Esophagus muscularis mucosa (tissue), 4 donors: ENCODE measurements at regions of chr16 and their contacts with region 1.

Region 1: GRCh38 chr16:11255737-11256660 is at the start of gene SOCS1:
- DNase-seq: peak; percentile 96
- H3K4me3 ChIP-seq: peak within 1 kb of the TSS; percentile 71 to 98 (median 80)
- H3K27ac ChIP-seq: peak within 1 kb of the TSS; percentile 92 to 97 (median 94)
- H3K4me1 ChIP-seq: peaks cover 36 to 54% (median 50%) of the 10 kb centered on the region in 4 donors
- H3K27me3 ChIP-seq: peaks cover 0 to 4% (median 0%) of the 10 kb centered on the region in 4 donors
- CTCF ChIP-seq: peak; percentile 94 to 96 (median 94)
- EP300 ChIP-seq: no peak
- POLR2A ChIP-seq: no peak
- total RNA-seq, gene SOCS1: 3.8 to 11.1 (median 6.1) TPM

Region 2: DNA sequence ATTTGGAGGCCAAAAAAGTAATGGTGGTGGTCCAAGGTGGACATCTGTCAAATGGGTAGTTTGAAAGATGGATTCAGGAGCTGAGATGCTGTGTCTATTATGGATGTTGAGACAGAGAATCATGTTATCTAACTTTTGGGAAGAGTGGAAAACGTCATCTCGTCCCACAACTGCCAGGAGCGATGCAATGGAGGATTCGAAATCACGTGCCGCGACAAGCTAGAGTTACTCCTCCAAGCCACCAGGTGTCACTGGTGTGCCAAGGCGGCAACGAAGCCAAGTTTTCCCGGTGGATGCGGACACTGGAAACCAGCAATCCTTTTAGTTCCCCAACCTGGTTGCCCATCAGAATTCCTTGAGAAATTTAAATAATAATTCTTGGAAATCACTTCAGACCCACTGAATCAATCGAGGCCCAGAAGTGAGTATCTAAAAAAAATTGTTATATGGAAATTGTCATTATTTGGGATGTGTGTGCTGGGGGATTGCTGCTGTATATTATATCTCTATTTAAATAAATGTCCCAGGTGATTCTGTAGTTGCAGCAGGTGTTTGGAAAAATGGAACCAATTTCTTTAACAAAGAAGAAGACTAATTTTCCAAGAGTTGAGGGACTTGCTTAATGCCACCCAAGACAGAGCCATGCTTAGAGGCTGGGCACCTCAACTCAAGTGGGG is 1958.4 kb before region 1 on chr16:
- intact Hi-C with region 1: no loop called
- DNase-seq: no peak
- H3K4me3 ChIP-seq: no peak overlapping the region
- H3K27ac ChIP-seq: no peak overlapping the region
- H3K4me1 ChIP-seq: no peaks in the 10 kb centered on the region
- H3K27me3 ChIP-seq: peaks cover 0 to 4% (median 0%) of the 10 kb centered on the region in 4 donors
- CTCF ChIP-seq: peak; percentile 71 to 79 (median 77)
- EP300 ChIP-seq: no peak
- POLR2A ChIP-seq: no peak

Region 3: DNA sequence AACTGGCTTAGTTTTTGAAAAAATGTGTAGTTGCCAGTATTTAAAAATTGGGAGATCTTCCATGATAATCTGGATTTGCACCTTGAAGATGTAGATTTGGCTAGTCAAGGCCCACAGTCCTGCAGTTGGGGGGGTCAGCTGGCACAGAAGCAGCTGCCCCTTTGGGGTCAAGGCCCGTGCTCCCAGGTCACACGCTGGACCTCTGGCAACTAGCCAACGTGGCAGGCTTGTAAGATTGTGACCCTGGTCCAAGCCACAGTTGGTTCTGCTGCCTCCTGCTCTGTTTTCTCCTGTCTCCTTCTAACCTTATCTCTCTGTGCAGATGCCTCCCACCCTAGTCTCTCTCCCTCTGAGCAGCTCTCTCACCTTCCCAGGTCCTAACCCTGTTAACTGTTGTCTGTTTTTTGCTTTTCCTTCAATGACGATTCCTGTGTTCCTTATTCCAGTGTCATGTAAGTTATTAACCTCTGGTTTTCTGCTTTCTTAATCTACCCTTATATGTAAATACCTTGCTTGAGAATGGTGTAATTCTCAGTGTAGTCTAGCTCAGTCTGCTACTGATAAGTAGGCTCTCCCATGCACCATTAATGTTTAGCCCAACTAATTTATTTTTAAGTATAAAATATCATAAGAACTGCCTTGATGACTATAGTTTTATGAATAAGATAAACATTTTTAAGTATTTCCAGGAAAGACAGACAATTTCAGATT is 283.7 kb before region 1 on chr16:
- intact Hi-C with region 1: loop called (anchors 1 kb)
- DNase-seq: no peak
- H3K4me3 ChIP-seq: no peak overlapping the region
- H3K27ac ChIP-seq: peak overlapping the region in 2 of 4 donors; percentile 15 to 20
- H3K4me1 ChIP-seq: peaks cover 5 to 13% (median 11%) of the 10 kb centered on the region in 4 donors
- H3K27me3 ChIP-seq: no peaks in the 10 kb centered on the region
- CTCF ChIP-seq: no peak
- EP300 ChIP-seq: no peak
- POLR2A ChIP-seq: no peak

Region 4: DNA sequence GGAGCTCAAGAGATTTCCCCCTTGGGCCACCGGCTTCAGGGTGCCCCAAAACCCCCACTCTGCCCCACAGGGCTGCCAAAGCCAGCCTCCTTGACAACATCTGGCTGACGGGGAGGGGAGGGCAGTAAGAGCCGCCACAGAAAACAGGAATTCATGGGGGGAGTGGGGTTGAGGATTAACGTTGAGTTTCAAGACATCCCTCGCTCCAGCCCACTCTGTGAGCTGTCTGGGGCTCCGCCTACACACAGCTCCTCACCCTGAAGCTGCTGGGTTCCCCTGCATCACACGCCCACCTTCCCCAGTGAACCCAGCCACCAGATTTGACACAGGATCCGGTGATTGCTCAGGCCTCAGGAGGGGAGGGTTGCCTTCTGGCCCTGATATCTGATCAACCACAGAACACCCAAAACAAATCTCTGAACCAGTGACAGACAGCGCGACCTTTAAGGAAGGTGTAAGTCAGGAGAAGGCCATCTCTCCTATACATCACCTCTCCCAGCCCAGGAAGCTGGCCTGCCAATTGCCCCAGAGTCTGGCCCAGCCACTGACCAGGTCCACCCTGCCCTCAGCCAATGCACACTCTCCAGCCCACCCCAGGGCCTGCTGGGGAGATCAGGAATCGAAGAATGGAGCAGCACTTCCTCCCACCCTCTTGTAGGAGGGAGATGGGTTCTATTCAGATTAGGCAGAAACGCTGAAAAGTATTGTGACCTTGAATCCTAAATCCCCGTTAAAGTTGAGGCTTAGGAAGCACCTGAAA is 179.6 kb before region 1 on chr16:
- intact Hi-C with region 1: loop called (anchors 10 kb)
- DNase-seq: no peak
- H3K4me3 ChIP-seq: no peak overlapping the region
- H3K27ac ChIP-seq: peak overlapping the region in 1 of 4 donors; percentile 53
- H3K4me1 ChIP-seq: peaks cover 8 to 32% (median 29%) of the 10 kb centered on the region in 4 donors
- H3K27me3 ChIP-seq: no peaks in the 10 kb centered on the region
- CTCF ChIP-seq: no peak
- EP300 ChIP-seq: no peak
- POLR2A ChIP-seq: no peak

Region 5: DNA sequence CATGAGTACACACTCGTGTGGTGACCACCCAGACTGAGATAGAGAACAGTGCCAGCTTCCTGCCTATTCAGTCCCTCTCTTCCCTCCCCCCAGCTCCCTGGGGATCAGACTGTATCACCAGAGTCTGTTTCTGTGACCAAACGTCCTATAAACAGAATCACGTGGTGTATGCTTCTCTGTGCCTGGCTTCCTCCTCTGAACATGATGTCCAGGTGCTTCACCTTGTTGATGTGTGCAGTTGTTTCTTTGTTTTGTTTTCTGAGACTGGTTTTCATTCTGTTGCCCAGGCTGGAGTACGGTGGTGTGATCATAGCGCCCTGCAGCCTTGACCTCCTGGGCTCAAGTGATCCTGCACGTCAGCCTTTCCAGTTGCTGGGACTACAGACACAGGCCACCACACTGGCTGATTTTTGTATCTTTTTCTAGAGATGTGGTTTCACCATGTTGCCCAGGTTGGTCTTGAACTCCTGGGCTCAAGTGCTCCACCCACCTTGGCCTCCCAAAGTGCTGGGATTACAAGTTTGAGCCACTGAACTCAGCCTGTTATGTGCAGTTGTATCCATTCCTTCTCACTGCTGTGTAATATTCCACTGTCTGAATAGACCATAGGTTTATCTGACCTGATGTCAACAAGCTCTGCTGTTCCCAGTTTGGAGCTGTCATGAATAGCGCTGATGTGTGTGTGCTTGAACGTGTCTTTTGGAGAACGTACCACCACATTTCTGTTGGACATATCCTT is 54.1 kb after region 1 on chr16:
- intact Hi-C with region 1: no loop called
- DNase-seq: no peak
- H3K4me3 ChIP-seq: no peak overlapping the region
- H3K27ac ChIP-seq: no peak overlapping the region
- H3K4me1 ChIP-seq: peaks cover 0 to 9% (median 3%) of the 10 kb centered on the region in 4 donors
- H3K27me3 ChIP-seq: no peaks in the 10 kb centered on the region
- CTCF ChIP-seq: no peak
- EP300 ChIP-seq: no peak
- POLR2A ChIP-seq: no peak

Region 6: DNA sequence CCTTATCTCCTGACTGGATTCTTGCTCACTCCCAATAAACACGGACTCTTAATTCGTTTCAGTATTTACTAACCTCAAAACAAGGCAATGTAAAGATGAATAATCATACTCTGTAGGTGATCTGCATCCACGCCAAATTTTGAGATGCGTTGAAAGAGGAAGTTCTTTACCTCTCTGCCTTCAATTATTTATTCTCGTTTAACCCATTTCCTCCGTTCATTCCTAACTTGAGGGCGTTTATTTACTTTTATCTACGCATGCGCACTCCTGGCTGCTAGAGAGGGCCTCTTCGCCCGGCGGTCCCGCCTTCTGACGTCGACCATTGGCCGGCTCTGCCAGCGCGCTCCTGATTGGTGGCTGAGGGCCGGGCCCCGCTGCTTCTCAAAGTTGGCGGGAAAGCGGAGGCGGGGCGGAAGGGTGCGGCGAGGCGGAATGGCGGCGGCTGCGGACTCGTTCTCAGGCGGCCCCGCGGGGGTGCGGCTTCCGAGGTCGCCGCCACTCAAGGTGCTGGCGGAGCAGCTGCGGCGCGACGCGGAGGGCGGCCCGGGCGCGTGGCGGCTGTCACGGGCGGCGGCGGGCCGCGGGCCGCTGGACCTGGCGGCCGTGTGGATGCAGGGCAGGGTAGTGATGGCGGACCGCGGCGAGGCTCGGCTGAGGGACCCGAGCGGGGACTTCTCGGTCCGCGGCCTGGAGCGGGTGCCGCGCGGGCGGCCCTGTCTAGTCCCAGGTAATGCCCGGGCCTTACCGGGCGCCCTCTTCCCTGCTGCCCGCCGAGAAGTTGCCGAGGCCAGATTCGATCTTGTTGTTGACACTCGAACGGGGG is 89.3 kb after region 1 on chr16 and contains the start of gene RMI2:
- intact Hi-C with region 1: loop called (anchors 5 kb)
- DNase-seq: peak; percentile 98
- H3K4me3 ChIP-seq: peak within 1 kb of the TSS; percentile 59 to 84 (median 70)
- H3K27ac ChIP-seq: peak within 1 kb of the TSS in 1 of 4 donors; percentile 2
- H3K4me1 ChIP-seq: peaks cover 18 to 32% (median 26%) of the 10 kb centered on the region in 4 donors
- H3K27me3 ChIP-seq: no peaks in the 10 kb centered on the region
- CTCF ChIP-seq: peak in 1 of 3 experiments; percentile 23
- EP300 ChIP-seq: no peak
- POLR2A ChIP-seq: no peak
- total RNA-seq, gene RMI2: 0.29 to 1.7 (median 0.33) TPM in 3 of 4 donors, not detected in the other

Region 7: GRCh38 chr16:11446566-11447119 is 190.6 kb after region 1 on chr16:
- intact Hi-C with region 1: no loop called
- DNase-seq: no peak
- H3K4me3 ChIP-seq: no peak overlapping the region
- H3K27ac ChIP-seq: no peak overlapping the region
- H3K4me1 ChIP-seq: no peaks in the 10 kb centered on the region
- H3K27me3 ChIP-seq: no peaks in the 10 kb centered on the region
- CTCF ChIP-seq: no peak
- EP300 ChIP-seq: no peak
- POLR2A ChIP-seq: no peak